Mammary epithelial cell (primary cell): ENCODE measurements at regions of chr19 and their contacts with region 1.

Region 1: GRCh38 chr19:38831142-38831605 is 420 bp downstream of the ECH1 start:
- DNase-seq: peak; percentile 86
- H3K4me3 ChIP-seq: peak overlapping the region; percentile 57 to 83 (median 60)
- H3K27ac ChIP-seq: peak overlapping the region; percentile 74
- H3K4me1 ChIP-seq: peaks cover 31% of the 10 kb centered on the region
- H3K27me3 ChIP-seq: no peaks in the 10 kb centered on the region
- CTCF ChIP-seq: no peak

Region 2: GRCh38 chr19:38640368-38640767 is 190.8 kb before region 1 on chr19:
- CTCF ChIA-PET with region 1: no interaction called
- dilution Hi-C with region 1: no loop called
- in situ Hi-C with region 1: no loop called
- intact Hi-C with region 1: no loop called
- DNase-seq: no peak
- H3K4me3 ChIP-seq: no peak overlapping the region
- H3K27ac ChIP-seq: no peak overlapping the region
- H3K4me1 ChIP-seq: peaks cover 34% of the 10 kb centered on the region
- H3K27me3 ChIP-seq: no peaks in the 10 kb centered on the region
- CTCF ChIP-seq: no peak

Region 3: DNA sequence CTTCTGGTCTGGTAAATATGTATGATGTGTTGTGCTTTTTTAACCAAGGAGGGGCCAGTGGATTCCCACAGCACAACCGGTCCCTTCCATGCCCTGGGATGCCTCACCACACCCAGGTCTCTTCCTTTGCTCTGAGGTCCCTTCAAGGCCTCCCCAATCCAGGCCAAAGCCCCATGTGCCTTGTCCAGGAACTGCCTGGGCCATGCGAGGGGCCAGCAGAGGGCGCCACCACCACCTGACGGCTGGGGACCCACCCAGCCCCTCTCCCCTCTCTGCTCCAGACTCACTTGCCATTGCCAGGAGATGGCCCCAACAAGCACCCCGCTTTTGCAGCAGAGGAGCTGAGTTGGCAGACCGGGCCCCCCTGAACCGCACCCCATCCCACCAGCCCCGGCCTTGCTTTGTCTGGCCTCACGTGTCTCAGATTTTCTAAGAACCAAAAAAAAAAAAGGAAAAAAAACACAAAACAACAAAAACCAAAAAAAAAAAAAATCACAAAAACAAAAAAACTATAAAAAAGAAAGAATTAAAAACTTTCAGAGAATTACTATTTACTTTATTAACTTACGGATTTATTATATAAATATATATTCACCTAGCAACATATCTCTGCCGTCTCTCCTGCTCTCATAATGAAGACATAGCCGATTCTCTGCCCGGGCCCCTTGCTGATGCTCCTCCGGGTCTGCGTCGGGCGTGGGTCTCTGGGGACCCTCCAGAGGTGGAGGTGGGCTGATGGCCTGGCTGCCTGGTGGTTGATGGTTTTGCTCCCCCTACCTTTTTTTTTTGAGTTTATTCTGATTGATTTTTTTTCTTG is 101.3 kb before region 1 on chr19:
- CTCF ChIA-PET with region 1: no interaction called
- dilution Hi-C with region 1: no loop called
- in situ Hi-C with region 1: loop called (anchors 10 to 25 kb)
- intact Hi-C with region 1: no loop called
- DNase-seq: peak; percentile 43
- H3K4me3 ChIP-seq: no peak overlapping the region
- H3K27ac ChIP-seq: no peak overlapping the region
- H3K4me1 ChIP-seq: peaks cover 24% of the 10 kb centered on the region
- H3K27me3 ChIP-seq: no peaks in the 10 kb centered on the region
- CTCF ChIP-seq: peak; percentile 59 to 85

Region 4: DNA sequence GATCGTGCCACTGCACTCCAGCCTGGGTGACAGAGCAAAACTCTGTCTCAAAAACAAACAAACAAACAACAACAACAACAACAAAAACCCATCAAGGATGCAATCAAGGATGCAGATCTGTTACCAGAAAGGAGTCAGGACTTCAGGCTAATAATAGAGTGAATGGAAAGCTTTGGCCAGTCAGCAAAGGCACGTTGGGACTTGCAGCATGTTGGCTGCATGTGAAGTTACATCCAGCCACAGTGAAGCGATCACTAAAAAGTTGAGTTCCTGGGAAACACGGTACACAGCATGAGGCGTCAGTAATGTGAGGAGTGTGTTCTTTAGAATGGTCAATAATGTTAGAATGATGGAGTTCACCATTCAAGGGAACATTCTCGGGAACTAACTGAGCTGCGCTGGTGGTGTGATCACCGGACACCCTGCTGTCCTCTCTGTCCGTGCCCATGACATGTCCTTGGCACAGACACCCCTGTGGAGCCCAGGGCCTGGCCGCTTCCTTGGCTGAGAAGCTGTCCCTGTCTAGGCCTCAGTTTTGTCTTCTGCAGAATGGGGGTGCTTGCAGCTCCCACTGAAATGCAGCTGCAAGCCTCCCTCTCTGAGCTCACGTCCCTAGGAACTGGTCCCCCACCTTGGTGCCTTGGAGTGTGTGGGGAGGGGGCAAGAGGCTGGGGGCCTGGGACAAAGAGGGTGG is 44.5 kb before region 1 on chr19:
- CTCF ChIA-PET with region 1: no interaction called
- dilution Hi-C with region 1: no loop called
- in situ Hi-C with region 1: loop called in 1 of 2 experiments (anchors 5 kb)
- intact Hi-C with region 1: loop called (anchors 5 kb)
- DNase-seq: peak; percentile 76
- H3K4me3 ChIP-seq: no peak overlapping the region
- H3K27ac ChIP-seq: peak overlapping the region; percentile 18
- H3K4me1 ChIP-seq: peaks cover 21% of the 10 kb centered on the region
- H3K27me3 ChIP-seq: no peaks in the 10 kb centered on the region
- CTCF ChIP-seq: no peak

Region 5: GRCh38 chr19:38799071-38799744 is 32.0 kb before region 1 on chr19:
- CTCF ChIA-PET with region 1: no interaction called
- dilution Hi-C with region 1: no loop called
- in situ Hi-C with region 1: no loop called
- intact Hi-C with region 1: loop called (anchors 1 kb)
- DNase-seq: no peak
- H3K4me3 ChIP-seq: no peak overlapping the region
- H3K27ac ChIP-seq: peak overlapping the region; percentile 37
- H3K4me1 ChIP-seq: peaks cover 8% of the 10 kb centered on the region
- H3K27me3 ChIP-seq: no peaks in the 10 kb centered on the region
- CTCF ChIP-seq: no peak

Region 6: DNA sequence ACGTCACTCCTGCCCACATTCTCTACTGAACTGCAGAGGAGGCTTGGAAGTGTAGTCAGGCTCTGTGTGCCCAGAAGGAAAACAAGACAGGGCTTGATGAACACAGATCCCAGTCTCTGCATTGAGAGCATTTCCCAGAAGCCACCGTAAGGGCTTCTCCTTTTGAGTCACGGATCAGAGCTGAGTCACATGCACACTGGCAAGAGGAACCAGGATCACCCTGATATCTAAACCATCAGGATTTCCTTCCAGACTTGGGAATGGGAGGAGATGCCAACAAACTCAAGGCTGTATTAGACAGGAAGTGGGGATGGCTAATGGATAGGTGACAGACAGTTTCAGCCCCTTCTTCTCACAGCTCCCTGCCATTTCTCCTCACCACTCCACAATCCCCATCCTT is 162.1 kb after region 1 on chr19:
- CTCF ChIA-PET with region 1: no interaction called
- dilution Hi-C with region 1: no loop called
- in situ Hi-C with region 1: no loop called
- intact Hi-C with region 1: no loop called
- DNase-seq: peak; percentile 96
- H3K4me3 ChIP-seq: no peak overlapping the region
- H3K27ac ChIP-seq: peak overlapping the region; percentile 8
- H3K4me1 ChIP-seq: peaks cover 25% of the 10 kb centered on the region
- H3K27me3 ChIP-seq: no peaks in the 10 kb centered on the region
- CTCF ChIP-seq: no peak